Activated naive CD8-positive, alpha-beta T cell treated with anti-CD3 and anti-CD28 coated beads, Interleukin-2, amount 10 ng/mL, durations not matched to agents 7 days and 5 days (primary cell): ENCODE measurements at regions of chr14 and their contacts with region 1.

Region 1: GRCh38 chr14:94080471-94081289 is at the start of gene DDX24:
- DNase-seq: peak; percentile 96
- ATAC-seq: peak; percentile 92
- H3K4me3 Mint-ChIP-seq: peak within 1 kb of the TSS; percentile 99
- H3K27ac Mint-ChIP-seq: peak within 1 kb of the TSS; percentile 100
- H3K4me1 Mint-ChIP-seq: peaks cover 38% of the 10 kb centered on the region
- H3K27me3 Mint-ChIP-seq: no peaks in the 10 kb centered on the region
- total RNA-seq, gene DDX24: 232 to 237 TPM

Region 2: GRCh38 chr14:93527068-93527668 is 553.5 kb before region 1 on chr14:
- POLR2A ChIA-PET with region 1: no interaction called
- DNase-seq: no peak
- ATAC-seq: no peak
- H3K4me3 Mint-ChIP-seq: no peak overlapping the region
- H3K27ac Mint-ChIP-seq: no peak overlapping the region
- H3K4me1 Mint-ChIP-seq: no peaks in the 10 kb centered on the region
- H3K27me3 Mint-ChIP-seq: peaks cover 7% of the 10 kb centered on the region

Region 3: DNA sequence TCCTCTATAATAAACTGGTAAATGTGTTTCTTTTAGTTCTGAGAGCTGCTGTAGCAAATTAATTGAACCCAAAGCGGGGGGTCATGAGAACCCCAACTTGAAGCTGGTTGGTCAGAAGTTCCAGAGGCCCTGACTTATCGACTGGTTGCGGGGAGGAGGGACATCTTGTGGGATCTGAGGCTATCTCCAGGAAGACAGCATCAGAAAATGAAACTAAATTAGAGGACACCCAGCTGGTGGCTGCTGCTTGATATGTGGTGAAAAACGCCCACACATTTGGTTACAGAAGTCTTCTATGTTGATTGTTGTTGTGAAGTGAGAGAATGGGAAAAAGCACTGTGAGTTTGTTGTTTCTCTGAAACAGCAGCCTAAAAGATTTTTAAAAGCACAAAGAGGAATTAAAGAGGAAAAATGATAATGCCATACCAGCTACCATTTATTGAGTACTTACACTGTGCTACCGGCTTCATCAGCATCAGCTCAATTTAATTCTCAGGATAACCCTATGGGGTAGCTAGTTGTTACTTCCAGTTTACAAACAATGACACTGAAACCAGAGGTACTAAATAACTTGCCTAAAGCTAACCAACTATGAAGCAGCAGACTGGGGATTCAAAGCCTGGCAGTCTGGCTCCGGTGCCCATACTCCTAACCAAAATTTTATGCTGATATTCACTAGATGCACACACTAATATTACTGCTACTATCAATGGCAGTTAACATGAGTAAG is 23.9 kb before region 1 on chr14:
- POLR2A ChIA-PET with region 1: interaction called, 26 read pairs
- DNase-seq: no peak
- ATAC-seq: peak; percentile 78
- H3K4me3 Mint-ChIP-seq: peak overlapping the region; percentile 51
- H3K27ac Mint-ChIP-seq: peak overlapping the region; percentile 67
- H3K4me1 Mint-ChIP-seq: peaks cover 55% of the 10 kb centered on the region
- H3K27me3 Mint-ChIP-seq: no peaks in the 10 kb centered on the region

Region 4: GRCh38 chr14:94100847-94101246 is 20.2 kb after region 1 on chr14:
- POLR2A ChIA-PET with region 1: no interaction called
- DNase-seq: no peak
- ATAC-seq: no peak
- H3K4me3 Mint-ChIP-seq: no peak overlapping the region
- H3K27ac Mint-ChIP-seq: no peak overlapping the region
- H3K4me1 Mint-ChIP-seq: no peaks in the 10 kb centered on the region
- H3K27me3 Mint-ChIP-seq: no peaks in the 10 kb centered on the region

Region 5: GRCh38 chr14:94144765-94145164 is 64.1 kb after region 1 on chr14:
- POLR2A ChIA-PET with region 1: no interaction called
- DNase-seq: no peak
- ATAC-seq: no peak
- H3K4me3 Mint-ChIP-seq: no peak overlapping the region
- H3K27ac Mint-ChIP-seq: peak overlapping the region; percentile 66
- H3K4me1 Mint-ChIP-seq: peaks cover 16% of the 10 kb centered on the region
- H3K27me3 Mint-ChIP-seq: peaks cover 15% of the 10 kb centered on the region